ENCODE measurements at regions of chr1 and their contacts with region 1.

Region 1: DNA sequence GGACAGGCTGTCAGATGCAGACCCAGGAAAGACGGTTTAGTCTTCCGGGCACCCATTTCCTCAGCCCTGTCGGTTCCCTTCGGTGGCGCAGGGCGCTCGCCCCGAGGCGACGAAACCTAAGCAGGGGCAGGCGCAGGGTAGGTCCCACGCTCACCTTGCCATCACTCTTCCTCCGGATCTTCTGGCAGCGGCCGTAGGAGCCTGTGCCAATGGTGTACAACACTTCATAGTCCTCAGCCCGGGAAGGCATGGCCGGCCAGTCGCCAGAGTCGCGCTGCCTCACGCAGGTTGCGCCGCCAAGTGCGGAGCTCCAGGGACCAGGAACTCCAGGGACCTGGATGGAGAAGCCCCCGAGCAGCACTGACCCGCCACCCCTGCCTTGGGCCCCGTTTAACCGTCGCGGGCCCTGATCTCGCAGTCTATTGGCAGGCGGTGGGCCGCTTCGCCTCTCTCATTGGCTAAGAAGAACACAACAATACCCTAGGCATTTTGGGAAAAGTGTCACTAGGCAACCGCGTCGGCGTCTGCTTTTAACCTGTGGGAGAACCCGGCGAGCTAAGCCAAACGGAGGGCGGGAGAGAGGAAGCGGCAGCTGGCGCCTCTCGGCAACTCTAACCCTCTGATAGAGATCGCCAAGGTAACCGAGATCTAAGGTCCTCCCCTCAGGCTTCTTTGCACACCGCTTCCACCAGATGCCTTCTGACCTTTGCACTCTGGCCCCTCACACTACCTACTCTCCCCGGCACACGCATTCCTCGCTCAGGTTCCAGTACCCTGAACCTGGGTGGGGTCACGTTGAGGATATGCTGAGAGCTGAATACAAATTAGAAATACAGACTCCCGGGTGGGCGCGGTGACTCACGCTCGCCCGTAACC is at the start of gene NEK2:
- DNase-seq: peak; percentile 100
- H3K4me3 Mint-ChIP-seq: peak within 1 kb of the TSS; percentile 92
- H3K27ac Mint-ChIP-seq: peak within 1 kb of the TSS; percentile 91
- H3K4me1 Mint-ChIP-seq: peaks cover 26% of the 10 kb centered on the region
- H3K27me3 Mint-ChIP-seq: no peaks in the 10 kb centered on the region
- CTCF ChIP-seq: no peak
- total RNA-seq, gene NEK2: 33.4 and 44.5 TPM in 2 replicates

Region 2: GRCh38 chr1:212012034-212012740 is 336.7 kb after region 1 on chr1:
- CTCF ChIA-PET with region 1: interaction called, 27 read pairs
- POLR2A ChIA-PET with region 1: interaction called, 4 read pairs
- intact Hi-C with region 1: loop called (anchors 1 kb)
- DNase-seq: peak; percentile 95
- H3K4me3 Mint-ChIP-seq: no peak overlapping the region
- H3K27ac Mint-ChIP-seq: no peak overlapping the region
- H3K4me1 Mint-ChIP-seq: no peaks in the 10 kb centered on the region
- H3K27me3 Mint-ChIP-seq: no peaks in the 10 kb centered on the region
- CTCF ChIP-seq: peak; percentile 100